Activated T-helper 1 cell treated with anti-CD3 and anti-CD28 coated beads, Interleukin-12 subunit alpha, Interleukin-12 subunit beta, Interleukin-2, Interleukin-4 antibody, amounts not matched to agents 30 ng/mL and 10 ng/mL and 1 ng/mL, durations not matched to agents 14 hours and 24 hours and 36 hours (primary cell): ENCODE measurements at regions of chrX and their contacts with region 1.

Region 1: DNA sequence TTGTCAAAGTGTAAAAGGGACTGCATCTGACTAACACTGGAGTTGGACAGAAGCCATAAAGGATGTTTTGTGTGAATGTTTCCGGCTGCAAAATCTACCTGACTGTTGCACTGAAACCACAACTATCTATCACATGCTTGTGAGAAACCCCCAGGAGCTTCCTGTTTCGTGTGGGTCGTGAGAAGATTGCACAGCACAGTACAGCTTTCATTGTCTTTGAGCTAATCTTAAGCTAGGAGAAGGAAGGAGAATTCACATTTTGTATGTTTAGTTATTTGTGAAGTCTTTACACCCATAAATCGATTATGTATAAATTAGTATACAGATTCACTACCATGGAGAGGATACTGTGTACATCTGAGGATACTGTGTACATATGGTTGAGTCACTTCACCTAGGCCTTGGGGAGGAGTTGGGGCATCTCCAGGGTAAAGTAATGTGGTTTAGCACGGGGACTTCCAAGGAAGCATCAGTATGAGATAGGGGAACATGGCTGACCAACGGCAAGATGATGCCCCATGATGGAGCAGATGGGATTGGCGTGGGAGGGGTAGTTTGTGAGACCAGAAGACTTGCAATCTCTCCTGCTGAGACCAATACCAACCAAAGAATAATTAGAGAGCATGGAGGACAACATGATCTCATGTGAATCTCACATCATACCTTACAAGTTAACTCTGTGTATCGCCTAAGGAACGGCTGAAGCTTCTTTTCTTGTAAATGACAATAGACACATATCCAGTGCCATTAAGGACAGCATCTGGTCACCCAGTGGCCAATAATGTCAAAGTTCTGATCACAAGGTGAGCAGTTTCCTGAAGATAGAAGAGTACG is 43.1 kb upstream of the FAM9C start:
- DNase-seq: peak; percentile 64
- H3K4me3 Mint-ChIP-seq: peak overlapping the region; percentile 79
- H3K27ac Mint-ChIP-seq: peak overlapping the region; percentile 100
- H3K4me1 Mint-ChIP-seq: peaks cover 94% of the 10 kb centered on the region
- H3K27me3 Mint-ChIP-seq: no peaks in the 10 kb centered on the region

Region 2: DNA sequence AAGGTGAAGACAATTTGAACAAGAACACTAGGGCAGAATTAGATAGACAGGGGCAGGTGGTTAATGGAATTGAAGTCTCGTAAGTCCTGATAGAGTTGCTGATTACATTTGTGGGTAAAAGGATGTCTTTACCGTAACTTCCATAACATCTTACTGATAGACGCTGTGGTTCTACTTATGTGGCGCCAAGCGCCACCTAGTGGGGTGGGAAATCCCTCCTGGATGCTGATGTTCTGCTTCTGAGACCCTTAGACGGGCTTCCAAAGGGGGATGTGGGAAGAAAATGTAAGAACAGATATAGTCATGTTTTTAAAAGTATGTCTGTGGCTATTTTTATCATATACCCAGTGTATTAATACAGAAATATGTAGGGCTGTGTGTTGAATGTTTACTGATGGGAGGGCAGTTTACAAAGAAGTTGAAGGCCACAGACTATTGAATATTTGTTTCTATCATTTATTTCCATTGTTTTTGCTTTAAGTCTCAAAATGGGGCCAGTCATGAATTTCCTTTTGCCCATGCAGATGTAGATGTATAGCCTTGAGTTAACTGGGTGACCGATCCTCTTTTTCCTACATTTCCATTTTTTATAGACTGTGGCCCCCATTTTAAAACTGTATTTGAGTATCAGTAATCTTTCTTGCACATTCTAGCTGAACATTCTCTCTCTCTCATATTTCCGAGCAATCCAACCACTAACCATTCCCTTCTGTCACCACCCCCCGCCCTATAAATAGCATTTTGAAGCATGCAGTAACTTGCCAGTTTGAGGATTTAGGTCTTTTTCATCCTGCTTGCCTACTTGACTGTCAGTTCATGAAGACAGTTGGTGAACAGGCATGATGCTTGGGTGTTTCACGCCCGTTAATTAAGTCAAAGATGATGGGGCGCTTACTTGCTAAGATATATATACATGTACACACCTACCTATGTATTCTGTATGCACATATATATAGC is 193.2 kb before region 1 on chrX:
- intact Hi-C with region 1: loop called (anchors 5 kb)
- DNase-seq: peak; percentile 31
- H3K4me3 Mint-ChIP-seq: no peak overlapping the region
- H3K27ac Mint-ChIP-seq: no peak overlapping the region
- H3K4me1 Mint-ChIP-seq: peaks cover 53% of the 10 kb centered on the region
- H3K27me3 Mint-ChIP-seq: peaks cover 4% of the 10 kb centered on the region

Region 3: DNA sequence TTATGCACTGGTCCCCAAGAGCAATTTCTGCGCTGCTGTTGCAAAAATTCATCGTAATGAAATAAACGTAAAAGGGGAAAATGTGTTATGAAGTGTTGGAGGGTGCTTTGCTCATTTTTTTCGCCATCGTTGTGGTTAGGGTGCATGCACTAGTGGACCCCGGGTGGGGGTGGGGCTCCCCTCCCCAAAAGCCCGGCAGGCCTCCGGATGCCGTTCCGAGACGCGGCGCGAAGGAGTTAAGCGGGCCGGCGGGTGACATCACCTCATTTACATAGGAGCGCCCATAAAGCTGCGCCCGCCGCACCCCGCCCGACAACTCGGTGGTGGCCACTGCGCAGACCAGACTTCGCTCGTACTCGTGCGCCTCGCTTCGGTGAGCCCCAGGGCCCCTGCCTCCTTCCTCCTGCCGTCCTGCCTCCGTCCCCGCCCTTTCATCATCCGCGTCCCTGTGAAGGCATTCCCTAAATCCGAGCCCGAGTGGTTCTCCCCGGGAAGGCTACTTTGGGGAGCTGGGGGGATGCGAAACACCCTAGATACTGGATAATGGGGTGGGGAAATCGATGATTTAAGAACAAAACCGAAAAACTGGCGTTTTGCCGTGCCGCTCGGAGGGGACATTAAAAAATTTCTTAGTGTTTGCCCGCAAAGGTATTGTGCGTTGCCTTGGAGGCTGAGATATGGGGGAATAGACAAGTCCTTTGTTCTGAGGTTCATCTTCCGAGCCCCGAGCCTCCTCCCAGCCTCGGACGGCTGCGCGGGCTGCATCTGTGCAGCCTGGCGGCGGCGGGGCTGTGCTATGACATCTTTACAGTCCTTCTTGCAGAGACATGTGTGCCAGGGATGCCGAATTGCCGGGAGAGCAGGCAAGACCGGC is 112.5 kb before region 1 on chrX and contains the start of gene TMSB4X:
- intact Hi-C with region 1: loop called (anchors 1 kb)
- DNase-seq: peak; percentile 83
- H3K4me3 Mint-ChIP-seq: peak within 1 kb of the TSS; percentile 97
- H3K27ac Mint-ChIP-seq: peak within 1 kb of the TSS; percentile 98
- H3K4me1 Mint-ChIP-seq: peaks cover 50% of the 10 kb centered on the region
- H3K27me3 Mint-ChIP-seq: no peaks in the 10 kb centered on the region
- total RNA-seq, gene TMSB4X: 6,544 and 6,612 TPM in 2 replicates

Region 4: GRCh38 chrX:13051529-13052172 is 35.9 kb before region 1 on chrX:
- intact Hi-C with region 1: loop called (anchors 1 kb)
- DNase-seq: no peak
- H3K4me3 Mint-ChIP-seq: peak overlapping the region; percentile 37
- H3K27ac Mint-ChIP-seq: peak overlapping the region; percentile 89
- H3K4me1 Mint-ChIP-seq: peaks cover 65% of the 10 kb centered on the region
- H3K27me3 Mint-ChIP-seq: peaks cover 1% of the 10 kb centered on the region

Region 5: DNA sequence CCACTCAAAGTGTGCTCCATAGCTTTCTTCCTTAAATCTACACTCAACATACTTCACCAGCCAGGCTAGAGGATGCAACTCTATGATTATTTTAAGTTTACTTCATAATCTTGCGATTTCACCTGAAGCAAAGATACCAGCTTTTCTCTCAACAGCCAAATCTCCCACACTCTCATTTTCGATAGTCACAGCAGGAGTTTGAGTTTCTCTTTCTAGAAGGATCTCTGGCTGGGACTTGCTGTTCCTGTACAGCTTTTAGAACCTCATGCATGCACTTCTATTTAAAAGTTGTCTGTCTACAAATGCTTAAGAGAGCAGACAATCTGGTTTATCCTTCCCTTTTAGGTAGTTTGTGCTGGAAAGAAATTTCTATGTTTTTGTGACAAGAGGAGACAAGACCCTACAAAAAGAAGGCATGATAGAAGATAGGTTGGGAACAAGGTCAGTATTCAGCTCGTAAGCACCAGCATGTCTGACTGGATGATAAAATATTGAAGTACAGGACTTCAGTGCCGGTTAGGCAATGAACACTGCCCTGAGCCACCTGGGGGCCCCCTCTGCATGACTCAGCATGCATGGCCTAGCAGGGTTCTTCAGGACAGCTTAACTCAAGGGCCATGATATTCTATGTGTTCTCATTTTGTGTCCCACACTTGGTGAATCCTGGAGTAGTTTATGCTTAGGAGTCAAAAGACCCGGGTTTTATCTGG is 166.7 kb after region 1 on chrX:
- intact Hi-C with region 1: loop called (anchors 2 kb)
- DNase-seq: no peak
- H3K4me3 Mint-ChIP-seq: peak overlapping the region; percentile 3
- H3K27ac Mint-ChIP-seq: peak overlapping the region; percentile 14
- H3K4me1 Mint-ChIP-seq: peaks cover 59% of the 10 kb centered on the region
- H3K27me3 Mint-ChIP-seq: no peaks in the 10 kb centered on the region

Region 6: GRCh38 chrX:13653022-13653693 is 565.6 kb after region 1 on chrX and contains the start of gene TCEANC:
- intact Hi-C with region 1: loop called (anchors 2 kb)
- DNase-seq: peak; percentile 91
- H3K4me3 Mint-ChIP-seq: peak within 1 kb of the TSS; percentile 88
- H3K27ac Mint-ChIP-seq: peak within 1 kb of the TSS; percentile 92
- H3K4me1 Mint-ChIP-seq: peaks cover 20% of the 10 kb centered on the region
- H3K27me3 Mint-ChIP-seq: no peaks in the 10 kb centered on the region
- total RNA-seq, gene TCEANC: 3.9 and 5.0 TPM in 2 replicates